Esophagus squamous epithelium (tissue), 5 donors: ENCODE measurements at regions of chr12 and their contacts with region 1.

Region 1: DNA sequence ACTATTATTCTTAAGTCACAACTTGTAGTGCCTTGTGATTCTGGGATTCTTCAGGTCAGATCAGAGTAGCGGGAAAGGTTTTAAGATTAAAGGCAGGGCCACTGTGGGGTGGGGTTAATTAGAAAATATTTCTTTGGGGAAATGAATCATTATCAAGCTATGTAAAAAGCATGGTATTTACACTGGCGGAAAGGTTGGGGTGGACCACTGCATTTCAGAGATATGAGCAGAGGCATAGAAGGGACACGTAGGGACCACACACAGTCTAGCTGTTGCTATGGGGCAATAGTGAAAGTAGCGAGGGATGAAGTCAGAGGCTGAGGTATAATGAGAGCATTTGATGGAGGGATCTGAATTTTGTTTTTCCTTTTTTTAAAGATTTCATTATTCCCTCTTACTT is 31.7 kb upstream of the KCNH3 start:
- DNase-seq: no peak
- H3K4me3 ChIP-seq: no peak overlapping the region
- H3K27ac ChIP-seq: no peak overlapping the region
- H3K4me1 ChIP-seq: peaks cover 0 to 13% (median 0%) of the 10 kb centered on the region in 3 donors
- H3K27me3 ChIP-seq: no peaks in the 10 kb centered on the region
- CTCF ChIP-seq: no peak
- POLR2A ChIP-seq: no peak

Region 2: DNA sequence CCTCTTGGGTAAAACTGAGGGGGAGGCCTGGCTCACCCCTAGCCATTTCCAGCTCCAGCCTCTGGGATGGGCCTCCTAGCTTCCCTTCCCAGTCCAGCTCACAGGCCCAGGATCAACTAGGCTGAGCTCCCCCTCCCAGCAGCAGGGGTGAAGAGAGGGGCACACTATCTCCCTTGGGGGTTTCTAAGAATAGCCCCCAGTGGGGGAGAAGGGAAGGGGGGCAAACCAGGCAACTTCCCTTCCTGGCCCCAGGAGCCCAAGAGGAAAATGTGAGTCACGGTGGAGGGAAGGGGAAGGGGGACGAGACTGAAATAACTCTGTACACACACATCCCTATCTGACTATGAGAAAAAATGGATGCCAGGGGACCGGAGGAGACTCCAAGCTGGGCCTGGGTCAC is 727.3 kb before region 1 on chr12:
- intact Hi-C with region 1: no loop called
- DNase-seq: no peak
- H3K4me3 ChIP-seq: no peak overlapping the region
- H3K27ac ChIP-seq: peak overlapping the region in 3 of 4 donors; percentile 37 to 80 (median 75)
- H3K4me1 ChIP-seq: peaks cover 23 to 50% (median 29%) of the 10 kb centered on the region in 3 donors
- H3K27me3 ChIP-seq: no peaks in the 10 kb centered on the region
- CTCF ChIP-seq: no peak
- POLR2A ChIP-seq: no peak

Region 3: GRCh38 chr12:49358483-49359141 is 148.5 kb before region 1 on chr12:
- intact Hi-C with region 1: loop called (anchors 5 kb)
- DNase-seq: no peak
- H3K4me3 ChIP-seq: peak overlapping the region in 1 of 4 donors; percentile 19
- H3K27ac ChIP-seq: no peak overlapping the region
- H3K4me1 ChIP-seq: peaks cover 4 to 15% (median 10%) of the 10 kb centered on the region in 3 donors
- H3K27me3 ChIP-seq: peaks cover 0 to 26% (median 0%) of the 10 kb centered on the region in 4 donors
- CTCF ChIP-seq: peak; percentile 40 to 82 (median 78)
- POLR2A ChIP-seq: no peak

Region 4: DNA sequence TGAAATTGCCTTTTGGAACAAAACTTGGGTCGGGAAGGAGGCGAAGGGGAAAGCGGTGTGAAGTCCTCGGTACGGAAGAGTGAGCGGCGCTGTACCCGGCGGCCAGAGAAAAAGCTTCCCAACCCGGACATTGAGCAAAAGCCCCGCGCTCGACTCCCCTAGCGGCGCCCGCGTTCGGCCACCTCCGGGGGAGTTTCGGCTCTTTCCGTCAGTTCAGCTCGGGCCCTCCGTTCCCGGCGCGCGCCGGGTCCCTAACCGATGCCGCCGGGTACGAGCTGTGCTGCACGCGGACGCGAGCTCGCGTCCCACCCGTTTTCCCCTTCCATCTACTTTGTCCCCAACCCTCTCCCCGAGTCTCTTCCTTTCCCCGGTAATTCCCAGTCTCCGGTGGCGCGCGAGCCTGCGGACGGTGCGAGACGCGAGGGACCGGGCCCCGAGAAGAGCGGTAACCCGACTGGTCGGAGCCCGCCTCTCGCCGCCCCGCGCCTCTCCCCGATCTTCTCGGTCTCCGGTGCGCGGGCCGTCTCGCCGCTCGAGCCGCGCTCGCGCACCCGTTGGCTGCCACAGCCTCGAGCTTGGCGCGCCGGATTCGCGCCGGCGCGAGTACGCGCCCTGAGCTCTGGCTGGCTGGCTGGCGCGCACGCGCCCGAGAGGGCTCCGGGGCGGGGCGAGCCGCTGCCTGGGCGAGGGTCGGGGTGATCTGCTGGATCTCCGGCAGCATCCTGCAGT is 140.3 kb before region 1 on chr12:
- intact Hi-C with region 1: loop called (anchors 5 kb)
- DNase-seq: no peak
- H3K4me3 ChIP-seq: peak overlapping the region; percentile 77 to 95 (median 82)
- H3K27ac ChIP-seq: peak overlapping the region; percentile 95 to 96 (median 96)
- H3K4me1 ChIP-seq: peaks cover 0 to 37% (median 18%) of the 10 kb centered on the region in 3 donors
- H3K27me3 ChIP-seq: no peaks in the 10 kb centered on the region
- CTCF ChIP-seq: peak in 4 of 6 experiments; percentile 29 to 39 (median 33)
- POLR2A ChIP-seq: peak in 3 of 4 donors; percentile 36 to 75 (median 50)

Region 5: DNA sequence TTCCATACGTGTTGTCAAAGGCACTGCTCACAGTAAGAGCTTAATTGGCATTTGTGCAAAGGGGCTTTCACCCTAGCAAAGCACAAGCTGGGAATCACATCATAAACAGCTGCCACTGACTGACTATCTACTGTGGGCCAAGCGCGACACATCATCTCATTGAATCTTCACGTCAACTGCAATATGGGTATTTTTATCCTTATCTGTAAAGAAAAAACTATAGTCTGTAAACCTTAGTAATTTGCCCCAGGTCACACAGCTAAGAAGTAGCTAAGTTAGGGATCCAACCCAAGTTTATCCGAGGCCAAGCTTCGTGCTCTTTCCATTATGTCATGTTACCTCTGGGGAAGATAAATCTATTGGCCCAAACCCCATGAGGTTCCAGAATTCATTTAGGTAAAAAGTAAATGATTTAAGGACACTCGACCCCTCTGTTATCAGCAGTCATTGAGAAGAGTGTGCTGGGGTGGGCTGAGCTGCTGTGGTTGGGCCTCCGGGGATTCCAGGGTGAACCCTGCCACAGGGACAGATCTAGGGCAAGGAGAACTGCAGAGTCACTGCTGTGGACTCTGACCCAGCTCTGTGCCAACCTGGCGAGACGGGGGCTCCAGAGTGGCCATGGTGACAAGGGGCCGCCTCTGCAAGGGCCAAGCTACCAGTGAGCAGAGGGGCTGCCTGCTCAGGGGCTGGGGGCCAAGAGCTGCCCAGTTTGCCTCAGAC is 293.4 kb after region 1 on chr12:
- intact Hi-C with region 1: no loop called
- DNase-seq: no peak
- H3K4me3 ChIP-seq: no peak overlapping the region
- H3K27ac ChIP-seq: no peak overlapping the region
- H3K4me1 ChIP-seq: peaks cover 0 to 7% (median 0%) of the 10 kb centered on the region in 3 donors
- H3K27me3 ChIP-seq: no peaks in the 10 kb centered on the region
- CTCF ChIP-seq: no peak
- POLR2A ChIP-seq: no peak